ENCODE measurements at regions of chr7 and their contacts with region 1.

Region 1: DNA sequence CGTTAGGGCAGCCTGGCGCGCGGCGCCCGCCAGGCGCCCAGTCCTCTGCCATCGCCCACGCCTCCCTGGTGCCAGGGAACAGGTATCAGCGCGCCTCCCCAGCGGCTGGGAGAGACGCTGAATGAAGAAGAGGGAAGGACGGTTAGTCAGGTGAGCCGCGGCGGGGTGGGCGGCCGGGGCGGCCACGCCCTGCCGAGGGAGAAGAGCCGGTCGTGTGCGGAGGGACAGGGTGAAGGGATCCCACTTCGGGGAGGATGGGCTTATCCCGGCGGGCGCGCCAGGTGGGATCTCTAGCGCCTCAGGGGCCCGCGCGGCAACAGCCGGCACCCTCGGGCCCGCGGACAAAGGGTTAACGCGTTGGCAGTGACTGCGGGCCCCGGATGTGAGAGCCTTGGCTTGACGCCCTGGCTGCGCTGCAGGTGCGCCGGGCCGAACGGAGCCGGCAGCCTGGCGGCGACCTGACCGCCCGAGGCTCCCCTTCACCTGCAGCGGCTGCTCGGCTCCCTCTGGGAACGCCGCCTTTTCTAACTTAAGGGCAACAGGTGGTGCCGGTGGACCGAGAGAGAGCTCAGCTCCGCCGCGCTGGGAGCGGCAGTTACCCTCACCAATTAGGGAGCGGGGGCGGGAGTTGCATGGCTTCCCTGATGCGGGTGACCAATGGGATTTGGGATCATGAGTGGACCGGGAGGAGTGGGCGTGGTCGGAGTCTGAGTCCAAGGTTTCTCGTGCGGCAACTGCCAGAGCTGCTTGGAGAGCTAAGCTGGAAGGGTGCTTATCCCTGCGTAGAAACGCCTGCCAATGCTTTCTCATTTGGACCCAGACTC is at the start of gene ARL4A:
- DNase-seq: peak; percentile 99
- ATAC-seq: peak; percentile 86
- H3K4me3 Mint-ChIP-seq: peak within 1 kb of the TSS; percentile 88
- H3K27ac Mint-ChIP-seq: peak within 1 kb of the TSS; percentile 94
- H3K4me1 Mint-ChIP-seq: peaks cover 56% of the 10 kb centered on the region
- H3K27me3 Mint-ChIP-seq: no peaks in the 10 kb centered on the region
- CTCF ChIP-seq: peak; percentile 16; the same call in 1 of the 2 replicates
- total RNA-seq, gene ARL4A: 20.9 to 25.4 TPM (median 21.9 TPM) in 3 replicates

Region 2: DNA sequence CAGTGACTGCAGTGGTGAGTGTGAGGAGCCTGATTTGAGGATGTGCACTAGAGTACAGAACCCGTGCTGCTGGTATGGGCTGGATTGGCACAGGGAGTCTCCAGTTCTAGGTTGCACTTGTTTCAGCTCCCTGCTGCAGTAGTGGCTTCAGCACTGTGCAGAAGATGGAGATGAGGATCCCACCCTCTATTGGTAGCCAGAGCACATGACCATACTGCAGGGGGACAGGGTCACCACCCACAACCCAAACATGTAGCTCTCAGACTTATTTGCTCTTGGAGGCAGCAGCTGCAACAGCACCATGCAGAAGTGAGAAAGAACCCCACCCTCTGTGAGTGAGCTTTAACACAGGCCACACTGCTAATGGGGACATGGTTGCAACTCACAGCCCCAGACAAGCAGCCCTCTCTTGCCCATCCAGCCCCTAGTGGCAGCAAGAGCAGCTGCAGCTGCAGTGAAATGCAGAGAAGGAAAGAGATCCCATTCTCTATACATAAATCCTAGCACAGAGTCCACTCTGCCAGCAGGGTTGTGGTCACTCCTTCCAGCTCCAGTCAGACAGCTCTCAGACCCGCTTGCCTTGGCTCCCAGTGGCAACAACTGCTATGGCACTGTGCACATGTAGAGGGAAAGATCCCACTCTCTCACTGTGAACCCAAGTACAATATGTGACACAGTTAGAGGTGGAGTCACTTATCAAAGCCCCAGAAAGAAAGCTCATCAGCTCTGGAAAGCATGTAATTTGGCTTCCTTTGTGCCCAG is 168.0 kb before region 1 on chr7:
- CTCF ChIA-PET with region 1: interaction called, 21 read pairs
- POLR2A ChIA-PET with region 1: no interaction called
- DNase-seq: peak; percentile 68
- ATAC-seq: peak; percentile 98
- H3K4me3 Mint-ChIP-seq: no peak overlapping the region
- H3K27ac Mint-ChIP-seq: no peak overlapping the region
- H3K4me1 Mint-ChIP-seq: peaks cover 3% of the 10 kb centered on the region
- H3K27me3 Mint-ChIP-seq: peaks cover 5% of the 10 kb centered on the region; the same call in 1 of the 2 replicates
- CTCF ChIP-seq: peak; percentile 75

Region 3: GRCh38 chr7:12646139-12646538 is 41.0 kb before region 1 on chr7:
- CTCF ChIA-PET with region 1: interaction called, 12 read pairs
- POLR2A ChIA-PET with region 1: interaction called, 3 read pairs
- DNase-seq: no peak
- ATAC-seq: peak; percentile 95
- H3K4me3 Mint-ChIP-seq: no peak overlapping the region
- H3K27ac Mint-ChIP-seq: no peak overlapping the region
- H3K4me1 Mint-ChIP-seq: peaks cover 31% of the 10 kb centered on the region
- H3K27me3 Mint-ChIP-seq: no peaks in the 10 kb centered on the region
- CTCF ChIP-seq: no peak

Region 4: DNA sequence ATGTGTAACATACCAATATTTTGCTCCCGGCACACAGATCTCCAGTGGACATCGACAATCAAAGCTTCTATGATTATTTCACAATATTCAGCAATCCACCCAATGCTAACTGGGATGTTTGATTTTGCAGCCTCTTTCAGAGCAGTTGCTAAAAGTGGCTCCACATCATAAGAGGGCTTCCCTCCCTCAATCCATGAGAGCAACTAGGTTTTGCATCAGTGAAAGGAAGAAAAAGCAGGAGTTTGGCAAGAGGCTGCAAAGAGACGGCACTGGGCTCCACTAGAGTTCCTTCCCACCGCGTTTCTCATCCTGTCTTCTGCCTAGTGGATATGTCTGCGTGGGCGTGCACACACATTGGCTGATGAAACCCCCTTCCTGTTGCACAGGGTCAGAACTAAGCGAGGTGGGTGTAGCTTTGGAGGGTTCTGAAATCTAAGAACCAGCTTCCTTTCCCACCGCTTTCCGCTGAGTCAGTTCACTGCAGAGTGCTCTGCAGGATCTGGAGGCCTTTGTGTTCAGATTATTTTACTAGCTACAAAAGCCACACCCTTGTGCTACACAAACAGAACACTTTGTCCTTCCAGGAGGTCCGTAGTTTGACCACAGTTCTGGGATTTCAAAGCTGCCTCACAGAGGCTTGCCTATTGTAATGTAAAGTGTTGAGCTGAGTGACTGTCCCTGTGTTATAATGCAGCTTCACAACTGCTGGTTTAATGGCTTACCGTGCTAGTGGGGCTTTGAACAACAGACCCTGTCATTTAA is 28.4 kb after region 1 on chr7:
- CTCF ChIA-PET with region 1: interaction called, 36 read pairs
- POLR2A ChIA-PET with region 1: interaction called, 6 read pairs
- DNase-seq: peak; percentile 26
- ATAC-seq: peak; percentile 95
- H3K4me3 Mint-ChIP-seq: peak overlapping the region; percentile 56
- H3K27ac Mint-ChIP-seq: peak overlapping the region; percentile 90
- H3K4me1 Mint-ChIP-seq: peaks cover 71% of the 10 kb centered on the region
- H3K27me3 Mint-ChIP-seq: no peaks in the 10 kb centered on the region; the same call in 1 of the 2 replicates
- CTCF ChIP-seq: no peak

Region 5: DNA sequence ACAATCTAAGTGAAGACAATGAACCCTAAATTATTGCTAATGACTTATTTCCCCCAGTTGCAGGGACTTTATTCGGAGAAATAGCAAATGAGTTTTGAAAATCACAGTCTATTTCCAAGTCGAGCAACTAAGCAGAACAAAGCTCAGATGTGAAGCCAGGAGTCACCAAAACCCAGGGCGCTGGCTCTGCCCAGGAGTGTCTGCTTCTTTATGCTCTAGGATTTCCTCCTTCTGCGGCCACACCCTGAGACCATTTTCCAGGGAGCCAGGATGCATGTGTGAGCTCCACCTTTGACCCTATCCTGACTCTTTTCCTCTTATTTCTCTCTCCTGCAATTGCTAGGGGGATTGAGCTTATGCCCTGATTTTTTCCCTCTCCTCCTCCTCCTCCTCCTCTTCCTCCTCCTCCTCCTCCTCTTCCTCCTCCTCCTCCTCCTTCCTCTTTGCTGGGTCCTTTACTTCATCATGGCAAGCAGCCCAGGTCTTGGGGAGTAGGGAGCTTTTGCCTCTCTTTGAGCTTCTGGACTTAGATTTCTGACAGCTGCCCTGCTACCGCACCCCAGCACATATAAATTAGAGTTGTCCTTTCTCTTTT is 234.7 kb after region 1 on chr7:
- CTCF ChIA-PET with region 1: interaction called, 10 read pairs
- POLR2A ChIA-PET with region 1: no interaction called
- DNase-seq: no peak
- ATAC-seq: peak; percentile 39; the same call in 1 of the 2 replicates
- H3K4me3 Mint-ChIP-seq: no peak overlapping the region
- H3K27ac Mint-ChIP-seq: no peak overlapping the region
- H3K4me1 Mint-ChIP-seq: no peaks in the 10 kb centered on the region
- H3K27me3 Mint-ChIP-seq: no peaks in the 10 kb centered on the region
- CTCF ChIP-seq: no peak

Region 6: DNA sequence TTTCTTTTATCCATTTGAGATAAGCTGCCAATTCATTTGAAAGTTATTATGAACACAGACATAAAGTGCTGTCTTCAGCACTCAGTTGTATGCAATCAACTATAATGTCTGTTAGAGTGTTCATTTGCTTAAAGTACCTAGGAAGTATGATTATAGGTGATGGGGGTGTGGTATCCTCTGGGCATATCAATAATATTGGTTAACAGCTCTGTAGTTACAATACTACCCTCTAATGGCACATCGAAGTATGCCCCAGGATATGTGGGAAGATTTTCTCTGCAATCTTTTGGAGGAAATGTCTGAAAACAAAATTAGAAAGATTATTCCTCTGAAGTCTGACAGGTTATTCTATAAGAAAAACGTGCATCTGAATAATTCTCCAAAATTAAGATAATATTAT is 430.0 kb after region 1 on chr7:
- CTCF ChIA-PET with region 1: interaction called, 77 read pairs
- POLR2A ChIA-PET with region 1: no interaction called
- DNase-seq: no peak
- ATAC-seq: peak; percentile 60; the same call in 1 of the 2 replicates
- H3K4me3 Mint-ChIP-seq: no peak overlapping the region
- H3K27ac Mint-ChIP-seq: no peak overlapping the region
- H3K4me1 Mint-ChIP-seq: peaks cover 18% of the 10 kb centered on the region
- H3K27me3 Mint-ChIP-seq: no peaks in the 10 kb centered on the region
- CTCF ChIP-seq: no peak

Measured in WTC11 (cell line).